Astrocyte of the cerebellum (primary cell): ENCODE measurements at regions of chrX and their contacts with region 1.

Region 1: GRCh38 chrX:17590892-17591740 is 146.2 kb upstream of the SCML1 start:
- DNase-seq: peak; percentile 57
- H3K4me3 ChIP-seq: no peak overlapping the region
- CTCF ChIP-seq: peak; percentile 72

Region 2: GRCh38 chrX:17496407-17496806 is 94.7 kb before region 1 on chrX:
- in situ Hi-C with region 1: loop called (anchors 5 kb)
- DNase-seq: no peak
- H3K4me3 ChIP-seq: no peak overlapping the region
- CTCF ChIP-seq: no peak

Region 3: DNA sequence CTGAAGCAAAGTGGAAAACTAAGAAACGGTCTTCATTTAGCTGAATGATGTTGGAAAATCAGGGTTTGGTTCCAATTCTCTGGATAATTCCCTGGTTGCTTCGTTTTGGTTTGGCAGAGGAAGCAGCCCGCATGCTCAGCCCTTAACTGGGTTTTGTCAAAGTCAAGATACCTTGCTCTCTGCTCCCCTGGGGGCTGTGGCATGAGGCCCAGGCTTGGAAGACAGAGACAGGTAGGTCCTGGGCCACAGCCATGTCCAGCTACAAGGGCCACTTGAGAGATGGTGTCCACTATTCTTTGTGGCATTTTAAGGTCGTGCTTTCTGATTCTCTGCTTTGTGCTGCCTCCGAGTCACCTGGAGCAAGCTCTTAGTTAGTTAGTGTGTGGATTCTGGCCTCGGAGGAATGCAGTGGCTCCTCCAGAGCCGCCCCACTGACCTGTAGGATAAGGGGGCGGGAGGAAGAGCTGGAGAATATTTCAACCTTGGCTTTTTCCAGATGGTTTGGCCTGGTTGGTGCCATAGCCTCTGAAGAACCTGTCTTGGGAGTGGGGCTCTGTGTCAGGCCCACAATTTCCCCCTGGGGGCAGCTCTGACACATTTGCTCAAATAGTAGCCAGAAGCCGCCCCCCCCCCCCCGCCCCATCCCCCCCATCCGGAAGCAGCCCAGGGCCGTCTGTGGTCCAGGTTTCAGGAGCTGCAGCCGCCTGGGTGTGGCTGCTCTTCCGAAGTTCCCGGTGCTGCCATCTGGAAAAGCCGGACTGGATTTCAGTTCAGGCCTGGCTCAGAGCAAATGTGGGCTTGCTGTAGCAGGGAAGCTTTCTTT is 69.0 kb before region 1 on chrX:
- in situ Hi-C with region 1: no loop called
- DNase-seq: no peak
- H3K4me3 ChIP-seq: no peak overlapping the region
- CTCF ChIP-seq: no peak

Region 4: GRCh38 chrX:17559728-17560379 is 31.3 kb before region 1 on chrX:
- in situ Hi-C with region 1: loop called (anchors 5 kb)
- DNase-seq: peak; percentile 85
- H3K4me3 ChIP-seq: no peak overlapping the region
- CTCF ChIP-seq: no peak

Region 5: GRCh38 chrX:17655211-17656034 is 64.3 kb after region 1 on chrX:
- in situ Hi-C with region 1: no loop called
- DNase-seq: no peak
- H3K4me3 ChIP-seq: peak overlapping the region; percentile 33
- CTCF ChIP-seq: no peak